ENCODE measurements at regions of chr18 and their contacts with region 1.

Region 1: DNA sequence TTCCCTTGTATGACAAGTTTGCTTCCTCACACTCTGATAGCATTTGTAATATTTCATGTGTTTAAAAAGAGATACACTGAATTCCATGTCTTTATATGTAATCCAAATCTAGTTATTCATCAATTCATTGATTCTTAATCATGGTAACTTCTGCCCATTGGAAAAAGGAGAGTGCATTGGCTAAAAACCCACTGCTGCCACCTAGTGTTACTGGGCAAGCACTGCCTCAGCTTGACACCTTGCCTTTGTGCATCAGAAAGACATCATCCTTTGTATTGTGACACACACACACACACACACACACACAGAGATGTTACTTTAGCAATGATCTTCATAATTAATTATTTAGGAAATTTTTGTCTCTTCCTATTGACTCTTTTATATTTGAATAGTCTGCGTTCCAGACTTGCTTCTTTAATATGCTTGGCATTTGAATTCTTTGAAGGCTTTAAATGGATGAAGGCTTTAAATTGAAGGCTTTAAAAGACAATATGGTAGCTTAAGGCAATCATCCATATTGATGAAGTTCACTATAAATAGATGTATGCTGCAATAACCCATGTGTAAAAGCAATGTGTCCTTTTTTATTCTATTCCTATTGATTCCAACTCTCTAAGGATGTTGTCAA is 414.2 kb upstream of the CHST9 start:
- DNase-seq: peak; percentile 39 to 65 (median 54)
- ATAC-seq: peak; percentile 76
- H3K4me3 ChIP-seq: no peak overlapping the region
- H3K27ac ChIP-seq: no peak overlapping the region
- H3K4me1 ChIP-seq: no peaks in the 10 kb centered on the region
- H3K27me3 ChIP-seq: no peaks in the 10 kb centered on the region
- CTCF ChIP-seq: peak; percentile 52 to 80 (median 73)
- EP300 ChIP-seq: no peak
- POLR2A ChIP-seq: no peak
- RAD21 ChIP-seq: peak; percentile 53 to 71

Region 2: GRCh38 chr18:26307189-26307773 is 1292.0 kb before region 1 on chr18:
- CTCF ChIA-PET with region 1: interaction called, 5 read pairs
- POLR2A ChIA-PET with region 1: no interaction called
- in situ Hi-C with region 1: no loop called
- intact Hi-C with region 1: loop called (anchors 5 kb)
- DNase-seq: peak; percentile 44 to 68 (median 48)
- ATAC-seq: peak; percentile 92
- H3K4me3 ChIP-seq: no peak overlapping the region
- H3K27ac ChIP-seq: no peak overlapping the region
- H3K4me1 ChIP-seq: no peaks in the 10 kb centered on the region
- H3K27me3 ChIP-seq: no peaks in the 10 kb centered on the region
- CTCF ChIP-seq: peak; percentile 50 to 72 (median 61)
- EP300 ChIP-seq: no peak
- POLR2A ChIP-seq: no peak
- RAD21 ChIP-seq: peak; percentile 54 to 67

Region 3: GRCh38 chr18:26621161-26622026 is 977.9 kb before region 1 on chr18:
- CTCF ChIA-PET with region 1: no interaction called
- POLR2A ChIA-PET with region 1: no interaction called
- in situ Hi-C with region 1: no loop called
- intact Hi-C with region 1: loop called (anchors 5 kb)
- DNase-seq: peak; percentile 43 to 53 (median 52)
- ATAC-seq: peak; percentile 94
- H3K4me3 ChIP-seq: no peak overlapping the region
- H3K27ac ChIP-seq: no peak overlapping the region
- H3K4me1 ChIP-seq: no peaks in the 10 kb centered on the region
- H3K27me3 ChIP-seq: no peaks in the 10 kb centered on the region
- CTCF ChIP-seq: peak; percentile 58 to 67 (median 59)
- EP300 ChIP-seq: no peak
- POLR2A ChIP-seq: no peak
- RAD21 ChIP-seq: peak; percentile 28 to 61; a peak in 3 of 4 replicates

Region 4: GRCh38 chr18:27355019-27355707 is 244.2 kb before region 1 on chr18:
- CTCF ChIA-PET with region 1: no interaction called
- POLR2A ChIA-PET with region 1: no interaction called
- in situ Hi-C with region 1: no loop called
- intact Hi-C with region 1: loop called (anchors 10 kb)
- DNase-seq: no peak
- ATAC-seq: no peak
- H3K4me3 ChIP-seq: no peak overlapping the region
- H3K27ac ChIP-seq: no peak overlapping the region
- H3K4me1 ChIP-seq: no peaks in the 10 kb centered on the region
- H3K27me3 ChIP-seq: no peaks in the 10 kb centered on the region
- CTCF ChIP-seq: no peak
- EP300 ChIP-seq: no peak
- POLR2A ChIP-seq: no peak
- RAD21 ChIP-seq: no peak

Region 5: DNA sequence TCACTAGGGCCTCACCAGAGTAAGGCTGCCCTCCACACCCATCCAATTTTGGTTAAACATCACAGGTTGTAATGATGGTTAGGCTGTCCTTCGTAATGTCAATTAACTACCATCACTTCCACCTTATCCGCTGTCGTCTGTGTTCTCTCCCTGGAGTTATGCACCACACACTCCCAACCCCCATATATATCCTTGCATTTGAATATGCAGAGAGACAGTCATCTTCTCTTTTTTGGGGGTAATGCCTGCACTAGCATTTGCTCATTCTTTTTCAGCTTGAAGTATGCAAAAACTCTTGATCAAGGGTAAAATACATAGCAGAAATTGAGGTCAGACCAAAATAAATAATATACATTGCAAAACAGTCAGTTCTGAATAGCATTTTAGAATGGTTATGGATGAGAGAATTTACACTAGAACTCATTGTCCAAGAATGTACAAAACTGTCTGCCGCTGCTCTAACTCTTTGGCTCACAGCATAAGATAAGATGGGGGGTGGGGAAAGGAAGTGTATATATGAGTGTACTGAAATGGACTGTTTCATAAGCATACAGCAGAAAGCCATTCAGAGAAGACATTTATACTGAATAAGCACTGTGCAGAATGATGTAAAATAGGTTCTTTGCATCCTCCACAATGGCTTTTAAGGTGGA is 16.4 kb before region 1 on chr18:
- CTCF ChIA-PET with region 1: no interaction called
- POLR2A ChIA-PET with region 1: no interaction called
- in situ Hi-C with region 1: no loop called
- intact Hi-C with region 1: no loop called
- DNase-seq: no peak
- ATAC-seq: no peak
- H3K4me3 ChIP-seq: no peak overlapping the region
- H3K27ac ChIP-seq: no peak overlapping the region
- H3K4me1 ChIP-seq: no peaks in the 10 kb centered on the region
- H3K27me3 ChIP-seq: no peaks in the 10 kb centered on the region
- CTCF ChIP-seq: no peak
- EP300 ChIP-seq: no peak
- POLR2A ChIP-seq: no peak
- RAD21 ChIP-seq: no peak

Region 6: DNA sequence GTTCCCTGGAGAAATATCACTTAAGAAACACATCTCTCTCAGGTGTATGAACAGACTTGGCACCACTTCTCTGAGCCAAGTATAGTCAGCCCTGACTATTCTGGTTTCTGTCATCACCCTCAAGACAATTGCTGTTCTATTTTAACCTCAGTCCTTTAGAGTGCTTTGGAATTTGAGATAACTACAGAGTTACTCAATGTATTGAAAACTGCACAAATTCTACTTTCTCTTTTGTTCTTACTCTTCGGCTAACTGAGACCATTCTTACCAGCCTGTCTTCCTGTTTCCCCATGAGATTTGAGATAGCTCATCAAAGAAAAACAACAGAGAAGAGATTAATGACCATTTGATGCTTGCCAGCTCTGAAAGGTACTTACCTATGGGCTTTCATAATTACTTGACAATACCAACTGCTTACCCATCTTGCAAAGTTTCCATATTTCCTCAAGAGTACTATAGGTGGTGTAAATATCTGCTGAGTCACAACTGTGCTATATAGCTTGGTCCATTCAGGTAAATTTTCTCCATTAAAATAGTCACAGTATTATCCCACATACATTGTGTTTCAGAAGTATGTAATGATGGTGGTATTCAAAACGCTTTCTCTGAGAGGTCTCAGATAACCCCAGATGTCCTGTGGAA is 53.3 kb after region 1 on chr18:
- CTCF ChIA-PET with region 1: no interaction called
- POLR2A ChIA-PET with region 1: no interaction called
- in situ Hi-C with region 1: no loop called
- intact Hi-C with region 1: no loop called
- DNase-seq: no peak
- ATAC-seq: no peak
- H3K4me3 ChIP-seq: no peak overlapping the region
- H3K27ac ChIP-seq: no peak overlapping the region
- H3K4me1 ChIP-seq: no peaks in the 10 kb centered on the region
- H3K27me3 ChIP-seq: no peaks in the 10 kb centered on the region
- CTCF ChIP-seq: no peak
- EP300 ChIP-seq: no peak
- POLR2A ChIP-seq: no peak
- RAD21 ChIP-seq: no peak

Region 7: DNA sequence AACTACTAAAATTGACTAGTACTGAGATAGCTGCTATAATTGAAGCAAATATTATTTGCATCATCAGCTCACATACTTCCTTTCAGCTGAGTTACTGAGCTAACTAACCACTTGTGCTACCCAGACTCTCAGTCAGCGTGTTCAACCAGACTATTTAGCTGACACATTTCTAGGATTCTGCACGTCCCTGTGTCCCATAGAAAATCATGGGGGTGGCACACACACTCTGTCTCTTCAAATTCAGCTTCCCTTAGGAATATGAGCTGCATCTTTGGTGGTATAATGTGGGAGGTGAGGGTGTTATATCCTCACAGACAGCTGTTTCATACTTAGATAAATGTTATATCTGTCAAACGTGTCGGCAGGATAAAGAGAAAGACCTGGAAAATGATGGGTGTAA is 153.6 kb after region 1 on chr18:
- CTCF ChIA-PET with region 1: no interaction called
- POLR2A ChIA-PET with region 1: no interaction called
- in situ Hi-C with region 1: no loop called
- intact Hi-C with region 1: no loop called
- DNase-seq: no peak
- ATAC-seq: no peak
- H3K4me3 ChIP-seq: no peak overlapping the region
- H3K27ac ChIP-seq: no peak overlapping the region
- H3K4me1 ChIP-seq: no peaks in the 10 kb centered on the region
- H3K27me3 ChIP-seq: no peaks in the 10 kb centered on the region
- CTCF ChIP-seq: no peak
- EP300 ChIP-seq: no peak
- POLR2A ChIP-seq: no peak
- RAD21 ChIP-seq: no peak

Measured in K562 (cell line).